GM10248 (cell line): ENCODE measurements at regions of chr17 and their contacts with region 1.

Region 1: GRCh38 chr17:48892940-48893645 is 506 bp downstream of the ATP5MC1 start:
- DNase-seq: no peak
- CTCF ChIP-seq: no peak

Region 2: GRCh38 chr17:48908047-48908843 is 15.2 kb after region 1 on chr17 and contains the start of gene UBE2Z:
- CTCF ChIA-PET with region 1: interaction called, 17 read pairs
- POLR2A ChIA-PET with region 1: interaction called, 7 read pairs
- DNase-seq: peak; percentile 96
- CTCF ChIP-seq: no peak